Posterior vena cava (tissue), 2 donors: ENCODE measurements at regions of chr1 and their contacts with region 1.

Region 1: GRCh38 chr1:9234223-9235095 is at the start of gene H6PD:
- DNase-seq: peak; percentile 95
- total RNA-seq, gene H6PD: 56.0 to 59.6 TPM

Region 2: GRCh38 chr1:9004700-9005394 is 229.6 kb before region 1 on chr1:
- intact Hi-C with region 1: no loop called
- DNase-seq: peak; percentile 94

Region 3: DNA sequence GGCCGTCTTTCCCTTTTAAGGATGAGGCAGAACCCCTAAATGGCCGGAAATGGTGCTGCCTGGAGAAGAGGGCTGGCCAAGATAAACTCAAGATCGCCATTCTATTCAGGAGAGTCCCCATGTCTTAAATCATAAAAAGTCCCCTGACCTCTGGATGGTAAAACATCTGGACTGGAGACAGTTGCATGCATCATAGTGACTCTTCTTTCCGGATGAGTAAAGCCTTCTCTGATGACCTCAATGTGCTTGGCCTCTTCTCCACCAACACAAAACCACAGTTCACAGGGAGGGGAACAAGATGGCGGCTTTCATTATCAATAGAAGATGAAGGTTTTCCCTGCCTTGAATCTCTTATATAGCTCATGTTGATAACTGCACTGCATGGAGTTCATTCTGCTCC is 27.4 kb before region 1 on chr1:
- intact Hi-C with region 1: loop called in 1 of 2 experiments (anchors 1 kb)
- DNase-seq: no peak

Region 4: GRCh38 chr1:9292361-9293240 is 58.1 kb after region 1 on chr1 and contains the start of gene SPSB1:
- intact Hi-C with region 1: no loop called
- DNase-seq: peak; percentile 91
- total RNA-seq, gene SPSB1: 30.9 to 48.0 TPM